ENCODE measurements at regions of chr2 and their contacts with region 1.

Region 1: GRCh38 chr2:68121873-68122679 is 35.6 kb upstream of the PNO1 start:
- DNase-seq: peak; percentile 93 to 95
- H3K4me3 ChIP-seq: no peak overlapping the region
- H3K27ac ChIP-seq: peak overlapping the region in 1 of 5 donors; percentile 16
- H3K4me1 ChIP-seq: peaks cover 0 to 20% (median 8%) of the 10 kb centered on the region in 4 donors
- H3K27me3 ChIP-seq: no peaks in the 10 kb centered on the region
- CTCF ChIP-seq: peak in 6 of 7 experiments; percentile 52 to 97 (median 94)
- EP300 ChIP-seq: no peak
- POLR2A ChIP-seq: no peak

Region 2: DNA sequence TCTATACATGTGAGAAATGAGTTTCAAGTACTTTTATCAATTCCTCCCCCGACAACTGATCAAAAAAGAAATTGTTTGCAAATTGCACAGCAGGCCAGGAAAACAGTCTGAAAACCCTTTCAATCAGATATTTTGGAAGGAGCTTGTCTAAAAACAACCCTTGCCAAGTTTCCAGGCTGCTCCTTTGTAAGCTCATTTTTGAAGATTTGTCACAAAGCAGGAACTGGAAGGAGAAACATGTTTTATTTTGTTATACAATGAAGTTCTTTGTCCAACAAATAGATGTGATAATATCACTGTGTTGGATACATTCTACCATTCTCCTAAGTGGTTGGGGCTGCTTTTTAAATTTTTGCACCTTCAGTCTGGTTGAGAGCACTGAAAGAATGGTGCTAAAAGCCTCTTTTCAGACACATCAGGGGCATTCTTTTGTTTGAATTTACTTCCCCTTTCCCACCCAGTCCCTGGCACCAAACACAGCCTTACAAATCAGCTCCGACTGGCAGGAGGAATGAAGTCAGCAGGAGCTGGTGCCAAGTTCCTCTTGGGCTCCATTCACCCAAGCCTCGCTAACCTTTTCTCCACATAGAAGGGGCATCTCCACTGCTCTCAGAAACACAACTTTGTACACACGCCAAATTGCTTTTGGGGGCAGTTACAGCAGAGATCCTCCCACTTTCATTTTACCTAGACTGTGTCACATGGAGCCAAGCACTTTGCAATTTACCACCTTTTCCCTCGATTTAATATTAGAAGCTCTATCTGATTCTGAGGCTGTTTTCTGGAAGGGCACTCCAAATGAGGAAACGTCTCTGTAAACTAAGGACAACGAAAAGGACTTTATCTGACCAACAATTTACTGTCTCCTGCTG is 147.3 kb before region 1 on chr2:
- intact Hi-C with region 1: no loop called
- DNase-seq: peak; percentile 64 to 70
- H3K4me3 ChIP-seq: no peak overlapping the region
- H3K27ac ChIP-seq: peak overlapping the region in 4 of 5 donors; percentile 13 to 74 (median 57)
- H3K4me1 ChIP-seq: peaks cover 0 to 12% (median 6%) of the 10 kb centered on the region in 4 donors
- H3K27me3 ChIP-seq: no peaks in the 10 kb centered on the region
- CTCF ChIP-seq: no peak
- EP300 ChIP-seq: no peak
- POLR2A ChIP-seq: no peak

Region 3: GRCh38 chr2:68282811-68283418 is 160.8 kb after region 1 on chr2:
- intact Hi-C with region 1: loop called (anchors 5 kb)
- DNase-seq: peak in 1 of 2 donors; percentile 55
- H3K4me3 ChIP-seq: no peak overlapping the region
- H3K27ac ChIP-seq: no peak overlapping the region
- H3K4me1 ChIP-seq: peaks cover 0 to 27% (median 10%) of the 10 kb centered on the region in 4 donors
- H3K27me3 ChIP-seq: no peaks in the 10 kb centered on the region
- CTCF ChIP-seq: peak in 5 of 7 experiments; percentile 12 to 67 (median 61)
- EP300 ChIP-seq: no peak
- POLR2A ChIP-seq: no peak

Region 4: GRCh38 chr2:68441179-68441993 is 319.3 kb after region 1 on chr2:
- intact Hi-C with region 1: loop called (anchors 5 kb)
- DNase-seq: peak; percentile 85 to 94
- H3K4me3 ChIP-seq: no peak overlapping the region
- H3K27ac ChIP-seq: peak overlapping the region in 4 of 5 donors; percentile 30 to 64 (median 50)
- H3K4me1 ChIP-seq: peaks cover 10 to 34% (median 21%) of the 10 kb centered on the region in 4 donors
- H3K27me3 ChIP-seq: no peaks in the 10 kb centered on the region
- CTCF ChIP-seq: peak in 5 of 7 experiments; percentile 74 to 91 (median 90)
- EP300 ChIP-seq: no peak
- POLR2A ChIP-seq: no peak

Region 5: DNA sequence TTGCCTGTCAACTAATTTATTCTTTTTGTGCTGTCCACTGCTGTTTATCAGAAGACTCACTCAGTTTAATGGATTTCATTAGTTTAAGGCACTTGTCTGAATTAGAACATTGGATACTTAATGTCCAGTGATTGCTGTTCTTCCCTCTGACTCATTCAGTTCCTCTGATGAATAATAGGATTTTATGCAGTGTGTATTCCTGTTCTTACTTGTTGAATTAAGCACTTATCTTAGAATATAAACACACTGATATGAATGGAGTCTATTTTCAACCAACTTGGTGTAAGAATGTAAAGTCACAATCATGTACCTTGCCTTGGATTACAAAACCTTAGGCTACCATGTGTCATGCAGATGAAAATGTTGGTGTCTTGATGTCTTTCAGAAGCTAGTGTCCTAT is 434.3 kb after region 1 on chr2:
- intact Hi-C with region 1: no loop called
- DNase-seq: no peak
- H3K4me3 ChIP-seq: no peak overlapping the region
- H3K27ac ChIP-seq: no peak overlapping the region
- H3K4me1 ChIP-seq: no peaks in the 10 kb centered on the region
- H3K27me3 ChIP-seq: no peaks in the 10 kb centered on the region
- CTCF ChIP-seq: no peak
- EP300 ChIP-seq: no peak
- POLR2A ChIP-seq: no peak

Measured in stomach (tissue), 19 donors.